Activated naive CD4-positive, alpha-beta T cell treated with anti-CD3 and anti-CD28 coated beads for 36 hours (primary cell): ENCODE measurements at regions of chr22 and their contacts with region 1.

Region 1: GRCh38 chr22:37608477-37609239 is at the start of gene GGA1:
- DNase-seq: peak; percentile 98
- H3K4me3 Mint-ChIP-seq: peak within 1 kb of the TSS; percentile 86
- H3K27ac Mint-ChIP-seq: peak within 1 kb of the TSS; percentile 98
- H3K4me1 Mint-ChIP-seq: peaks cover 50% of the 10 kb centered on the region
- H3K27me3 Mint-ChIP-seq: no peaks in the 10 kb centered on the region
- total RNA-seq, gene GGA1: 46.1 to 49.1 TPM

Region 2: DNA sequence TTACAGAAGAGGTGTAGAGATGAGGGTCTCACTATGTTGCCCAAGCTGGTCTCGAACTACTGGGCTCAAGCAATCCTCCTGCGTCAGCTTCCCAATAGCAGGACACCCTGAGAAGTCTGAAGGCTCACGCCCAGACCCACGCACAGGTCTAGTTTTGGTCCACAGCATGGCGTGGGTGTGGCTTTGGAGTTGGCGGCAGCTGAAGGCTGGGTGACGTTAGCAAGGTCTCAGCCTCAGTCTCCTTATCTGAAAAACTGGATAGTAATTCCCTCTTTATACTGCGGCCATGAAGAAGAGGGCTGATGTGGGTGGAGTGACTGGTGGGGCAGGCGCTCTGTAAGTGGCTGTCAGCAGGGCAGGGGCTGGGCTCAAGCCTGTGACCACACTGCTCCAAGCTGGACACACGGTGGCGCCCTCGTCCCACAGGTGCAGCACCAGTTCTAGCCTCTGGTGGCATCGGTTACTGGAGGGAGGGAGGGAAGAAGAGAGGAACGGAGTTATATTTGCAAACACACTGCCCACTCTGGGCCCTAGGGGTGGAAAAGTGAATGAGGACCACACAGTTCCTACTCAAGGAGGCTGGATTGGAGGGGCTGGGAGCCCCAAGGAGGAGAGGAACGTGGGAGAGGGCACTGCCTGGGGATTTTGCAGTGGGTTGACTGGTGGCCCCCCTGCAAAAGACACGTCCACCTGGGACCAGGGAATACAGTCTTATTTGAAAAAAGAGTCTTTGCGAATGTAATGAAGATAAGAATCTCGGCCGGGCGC is 69.9 kb before region 1 on chr22:
- CTCF ChIA-PET with region 1: interaction called, 12 read pairs
- intact Hi-C with region 1: loop called (anchors 1 kb)
- DNase-seq: peak; percentile 97
- H3K4me3 Mint-ChIP-seq: no peak overlapping the region
- H3K27ac Mint-ChIP-seq: no peak overlapping the region
- H3K4me1 Mint-ChIP-seq: peaks cover 34% of the 10 kb centered on the region
- H3K27me3 Mint-ChIP-seq: peaks cover 11% of the 10 kb centered on the region

Region 3: DNA sequence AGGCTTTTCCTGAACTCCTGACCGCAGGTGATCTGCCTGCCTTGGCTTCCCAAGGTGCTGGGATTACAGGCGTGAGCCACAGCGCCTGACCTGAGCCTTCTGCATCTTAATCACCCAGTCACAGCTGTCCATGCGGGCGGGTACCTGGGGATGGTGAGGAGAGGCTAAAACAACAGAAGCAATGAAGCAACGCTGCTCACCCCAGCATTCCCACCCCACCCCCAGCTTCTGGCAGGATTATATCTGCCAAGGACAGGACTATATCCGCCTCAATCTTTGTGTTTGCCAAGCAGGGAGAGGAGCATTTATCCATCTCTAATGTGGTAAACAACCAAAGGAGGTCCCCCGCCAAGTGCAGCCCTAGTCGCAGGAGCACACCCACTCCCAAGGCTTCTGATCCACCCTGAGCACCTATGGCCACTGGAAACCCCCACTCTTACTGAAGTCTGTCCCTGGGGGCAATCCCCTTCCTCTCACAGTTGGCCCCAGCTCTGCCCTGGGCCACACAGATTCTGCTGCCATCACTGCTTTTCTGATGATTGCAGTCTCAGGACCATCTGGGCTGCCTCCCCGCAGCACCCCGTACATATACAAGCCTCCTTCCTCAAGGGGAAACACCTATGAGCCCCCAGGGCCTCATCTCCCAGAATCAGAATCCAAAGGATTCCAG is 20.0 kb before region 1 on chr22:
- CTCF ChIA-PET with region 1: interaction called, 42 read pairs
- intact Hi-C with region 1: loop called (anchors 1 kb)
- DNase-seq: no peak
- H3K4me3 Mint-ChIP-seq: no peak overlapping the region
- H3K27ac Mint-ChIP-seq: no peak overlapping the region
- H3K4me1 Mint-ChIP-seq: peaks cover 13% of the 10 kb centered on the region
- H3K27me3 Mint-ChIP-seq: no peaks in the 10 kb centered on the region

Region 4: DNA sequence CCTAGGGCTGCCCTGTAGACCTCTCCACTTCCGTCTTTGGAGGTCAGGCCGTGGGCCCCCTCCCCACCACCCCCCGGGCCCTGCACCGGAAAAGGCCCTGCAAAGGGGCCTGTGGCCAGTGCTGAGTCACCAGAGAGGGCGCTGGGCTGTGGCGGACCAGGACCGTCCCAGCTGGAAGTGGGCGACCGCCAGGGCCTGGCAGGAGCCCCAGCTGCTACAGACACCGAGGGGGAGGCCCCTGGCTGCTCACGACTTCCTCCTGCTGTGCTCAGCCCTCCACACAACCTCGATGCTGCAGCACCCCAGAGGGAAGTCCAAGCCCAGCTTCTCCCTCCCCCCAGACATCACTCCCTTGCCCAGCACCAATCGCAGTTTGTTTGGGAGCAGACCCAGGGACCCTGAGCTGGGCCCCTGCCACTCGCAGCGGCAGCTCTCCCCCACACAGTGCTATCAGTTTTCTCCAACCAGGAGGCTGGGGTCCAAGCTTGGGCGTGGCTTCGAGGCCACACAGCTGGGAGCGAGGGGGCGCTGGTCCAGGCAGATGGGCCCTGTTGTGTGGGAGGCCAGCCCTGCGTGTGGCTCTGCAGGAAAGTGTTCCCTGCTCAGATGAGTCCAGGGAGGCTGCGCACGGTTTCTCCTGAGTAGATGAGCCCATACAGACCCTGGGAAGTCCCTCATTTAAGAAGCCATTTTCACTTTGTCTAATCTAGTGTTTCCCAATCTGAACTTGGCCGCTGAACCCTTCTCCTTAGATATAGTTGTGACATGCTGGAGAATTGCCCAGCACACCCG is 25.2 kb after region 1 on chr22:
- CTCF ChIA-PET with region 1: interaction called, 29 read pairs
- intact Hi-C with region 1: loop called (anchors 1 kb)
- DNase-seq: peak; percentile 79
- H3K4me3 Mint-ChIP-seq: peak overlapping the region; percentile 54
- H3K27ac Mint-ChIP-seq: peak overlapping the region; percentile 83
- H3K4me1 Mint-ChIP-seq: peaks cover 55% of the 10 kb centered on the region
- H3K27me3 Mint-ChIP-seq: no peaks in the 10 kb centered on the region

Region 5: GRCh38 chr22:37676736-37677492 is 68.3 kb after region 1 on chr22:
- CTCF ChIA-PET with region 1: interaction called, 8 read pairs
- intact Hi-C with region 1: loop called (anchors 1 kb)
- DNase-seq: peak; percentile 97
- H3K4me3 Mint-ChIP-seq: peak overlapping the region; percentile 83
- H3K27ac Mint-ChIP-seq: peak overlapping the region; percentile 95
- H3K4me1 Mint-ChIP-seq: peaks cover 56% of the 10 kb centered on the region
- H3K27me3 Mint-ChIP-seq: no peaks in the 10 kb centered on the region

Region 6: GRCh38 chr22:37849089-37849751 is 240.6 kb after region 1 on chr22 and contains the start of gene EIF3L:
- CTCF ChIA-PET with region 1: no interaction called
- intact Hi-C with region 1: loop called (anchors 1 kb)
- DNase-seq: peak; percentile 93
- H3K4me3 Mint-ChIP-seq: peak within 1 kb of the TSS; percentile 92
- H3K27ac Mint-ChIP-seq: peak within 1 kb of the TSS; percentile 94
- H3K4me1 Mint-ChIP-seq: peaks cover 50% of the 10 kb centered on the region
- H3K27me3 Mint-ChIP-seq: no peaks in the 10 kb centered on the region
- total RNA-seq, gene EIF3L: 776 to 797 TPM

Region 7: DNA sequence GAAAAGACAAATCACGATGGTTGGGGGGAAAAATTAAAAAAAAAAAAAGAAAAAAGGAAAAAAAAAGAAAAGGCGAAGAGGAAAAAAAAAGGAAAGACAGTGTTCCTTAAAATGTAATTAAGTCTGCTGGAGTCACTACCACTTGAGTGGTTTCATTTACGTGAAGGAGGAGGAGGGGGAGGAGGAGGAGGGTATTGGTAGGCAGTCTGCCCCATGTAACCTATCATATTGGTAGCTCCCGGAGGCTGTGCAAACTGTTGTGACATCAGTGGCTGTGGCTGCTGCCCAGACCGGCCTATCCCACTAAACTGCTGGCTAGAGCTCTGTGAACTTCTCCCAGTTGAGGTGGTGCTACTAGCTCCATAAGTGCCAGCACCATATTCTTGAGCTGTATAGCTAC is 877.1 kb after region 1 on chr22:
- CTCF ChIA-PET with region 1: no interaction called
- intact Hi-C with region 1: no loop called
- DNase-seq: no peak
- H3K4me3 Mint-ChIP-seq: no peak overlapping the region
- H3K27ac Mint-ChIP-seq: peak overlapping the region; percentile 41
- H3K4me1 Mint-ChIP-seq: peaks cover 52% of the 10 kb centered on the region
- H3K27me3 Mint-ChIP-seq: no peaks in the 10 kb centered on the region